ENCODE measurements at regions of chr10 and their contacts with region 1.

Region 1: DNA sequence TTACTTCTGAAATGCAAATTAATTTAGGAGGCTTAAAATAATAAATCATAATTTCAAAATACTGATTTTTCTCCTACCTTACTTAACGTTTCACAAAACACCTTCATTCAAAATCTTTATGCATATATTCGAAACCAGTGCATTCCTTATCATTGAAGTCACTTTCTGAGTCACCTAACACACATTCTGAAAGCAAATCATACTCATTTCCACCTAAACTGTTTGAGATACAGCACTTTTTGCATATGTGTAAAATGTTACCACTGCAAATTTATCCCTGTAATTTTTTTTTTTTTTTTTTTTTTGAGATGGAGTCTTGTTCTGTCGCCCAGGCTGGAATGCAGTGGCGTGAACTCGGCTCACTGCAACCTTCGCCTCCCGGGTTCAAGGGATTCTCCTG is 15.7 kb downstream of the PPP3CB start:
- DNase-seq: no peak
- H3K4me3 Mint-ChIP-seq: no peak overlapping the region
- H3K27ac Mint-ChIP-seq: no peak overlapping the region
- H3K4me1 Mint-ChIP-seq: peaks cover 27% of the 10 kb centered on the region
- H3K27me3 Mint-ChIP-seq: no peaks in the 10 kb centered on the region

Region 2: DNA sequence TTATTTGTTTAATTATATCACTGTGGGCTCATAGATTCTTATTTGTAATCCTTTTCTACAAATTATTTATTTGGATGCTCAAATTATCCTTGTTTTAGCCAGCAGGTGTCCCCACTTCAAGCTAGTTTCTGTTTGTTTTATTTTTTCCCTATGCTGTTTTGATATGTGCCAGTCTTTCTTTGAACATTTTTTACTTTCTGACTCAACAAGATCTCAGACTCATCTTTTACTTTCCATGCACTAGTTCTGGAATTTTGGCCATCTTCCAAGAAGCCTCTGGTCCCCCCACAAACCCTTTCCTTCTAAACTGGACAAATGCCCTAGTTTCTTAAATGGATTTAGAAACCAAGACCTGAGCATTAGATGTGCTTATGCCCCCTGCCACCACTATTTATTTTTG is 216.2 kb before region 1 on chr10:
- intact Hi-C with region 1: loop called (anchors 5 kb)
- DNase-seq: no peak
- H3K4me3 Mint-ChIP-seq: no peak overlapping the region
- H3K27ac Mint-ChIP-seq: no peak overlapping the region
- H3K4me1 Mint-ChIP-seq: peaks cover 10% of the 10 kb centered on the region
- H3K27me3 Mint-ChIP-seq: peaks cover 15% of the 10 kb centered on the region

Region 3: DNA sequence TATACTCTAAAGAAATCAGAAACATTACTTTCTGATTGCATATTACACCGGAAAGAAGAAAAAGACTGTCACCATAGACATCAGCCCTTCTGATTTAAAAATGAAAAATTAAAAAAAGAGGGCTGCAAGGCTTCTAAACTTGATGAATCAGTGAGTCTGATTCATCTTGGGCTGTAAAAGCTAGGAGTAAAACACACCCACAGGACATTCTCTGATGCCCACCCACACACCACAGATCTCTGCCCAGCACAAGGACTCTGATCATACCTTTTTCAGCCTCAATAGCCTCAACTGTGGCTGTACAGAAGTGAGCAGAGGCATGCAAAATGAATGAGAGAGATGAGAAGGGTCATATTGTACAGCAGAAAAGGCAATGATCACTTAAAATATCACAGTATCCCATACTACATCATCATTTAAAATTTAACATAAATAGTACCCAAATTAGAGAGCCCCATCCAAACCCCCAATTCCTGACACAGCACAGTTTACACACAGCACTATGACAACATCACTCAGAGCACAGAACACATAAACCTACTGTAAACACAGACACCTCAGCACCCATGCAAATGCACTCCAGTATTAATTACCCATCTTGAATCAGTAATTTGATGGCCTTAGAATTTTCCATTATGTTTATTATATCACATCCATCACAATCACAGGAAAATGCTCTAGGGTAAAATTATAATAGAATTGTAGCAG is 40.4 kb before region 1 on chr10:
- intact Hi-C with region 1: loop called (anchors 5 kb)
- DNase-seq: no peak
- H3K4me3 Mint-ChIP-seq: no peak overlapping the region
- H3K27ac Mint-ChIP-seq: no peak overlapping the region
- H3K4me1 Mint-ChIP-seq: peaks cover 17% of the 10 kb centered on the region
- H3K27me3 Mint-ChIP-seq: no peaks in the 10 kb centered on the region

Region 4: DNA sequence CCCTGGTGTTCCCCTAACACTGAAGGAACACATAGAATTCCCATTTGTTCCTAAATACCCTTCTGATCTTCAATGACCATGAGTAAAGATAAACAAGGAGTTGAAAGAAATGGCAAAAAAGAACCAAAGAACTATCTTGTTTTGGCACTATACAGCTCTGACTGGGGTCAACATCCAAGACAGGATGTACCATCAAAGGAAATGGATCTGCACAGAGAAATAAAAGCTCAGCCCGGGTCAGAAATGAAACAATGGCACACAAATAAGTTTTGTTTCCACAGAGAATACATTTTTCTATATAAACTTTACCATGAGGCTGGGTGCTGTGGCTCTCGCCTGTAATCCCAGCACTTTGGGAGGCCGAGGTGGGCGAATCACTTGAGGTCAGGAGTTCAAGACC is 129.0 kb after region 1 on chr10:
- intact Hi-C with region 1: no loop called
- DNase-seq: no peak
- H3K4me3 Mint-ChIP-seq: no peak overlapping the region
- H3K27ac Mint-ChIP-seq: no peak overlapping the region
- H3K4me1 Mint-ChIP-seq: no peaks in the 10 kb centered on the region
- H3K27me3 Mint-ChIP-seq: no peaks in the 10 kb centered on the region

Measured in activated T-helper 1 cell treated with anti-CD3 and anti-CD28 coated beads, Interleukin-12 subunit alpha, Interleukin-12 subunit beta, Interleukin-2, Interleukin-4 antibody, amounts not matched to agents 30 ng/mL and 10 ng/mL and 1 ng/mL, durations not matched to agents 14 hours and 24 hours and 36 hours (primary cell).